ENCODE measurements at regions of chr4 and their contacts with region 1.

Region 1: DNA sequence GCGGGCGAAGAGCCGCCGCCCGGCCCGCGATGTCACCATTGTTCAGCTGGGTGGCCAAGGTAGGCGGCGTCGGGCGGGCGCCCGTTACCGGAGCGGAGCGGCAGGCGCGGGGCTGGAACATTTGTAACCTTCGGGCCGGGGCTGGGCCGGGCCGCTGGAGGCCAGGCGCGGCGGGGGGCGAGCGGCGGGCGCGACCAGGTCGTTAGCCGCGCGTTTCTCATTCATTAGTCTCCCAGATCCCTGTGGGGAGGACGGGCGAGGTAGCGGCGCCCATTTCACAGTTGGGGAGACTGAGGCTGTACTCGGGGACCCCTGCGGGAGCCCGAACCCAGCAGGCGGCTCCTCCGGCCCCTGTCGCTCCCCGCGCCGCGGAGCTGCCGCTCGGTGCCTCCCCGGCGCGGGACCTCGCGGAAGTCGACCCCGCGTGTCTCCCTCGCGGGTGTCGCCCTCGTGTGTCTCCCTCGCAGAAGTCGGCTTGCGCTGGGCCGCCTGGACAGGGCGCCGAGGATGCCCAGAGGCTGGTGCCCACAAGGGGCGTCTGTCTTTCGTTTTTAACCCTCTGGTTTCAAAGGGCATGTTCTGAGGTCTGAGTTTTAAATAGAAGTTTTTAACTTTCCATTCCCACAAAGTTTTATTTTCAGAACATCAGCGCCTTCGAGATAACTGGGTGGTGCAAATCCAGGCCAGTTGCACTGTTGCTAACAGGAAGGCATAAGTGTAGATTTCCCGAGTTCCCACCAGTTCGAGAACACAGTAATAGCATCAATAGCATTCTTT is 17.5 kb downstream of the PTTG2 start:
- DNase-seq: peak; percentile 93
- ATAC-seq: peak; percentile 87

Region 2: DNA sequence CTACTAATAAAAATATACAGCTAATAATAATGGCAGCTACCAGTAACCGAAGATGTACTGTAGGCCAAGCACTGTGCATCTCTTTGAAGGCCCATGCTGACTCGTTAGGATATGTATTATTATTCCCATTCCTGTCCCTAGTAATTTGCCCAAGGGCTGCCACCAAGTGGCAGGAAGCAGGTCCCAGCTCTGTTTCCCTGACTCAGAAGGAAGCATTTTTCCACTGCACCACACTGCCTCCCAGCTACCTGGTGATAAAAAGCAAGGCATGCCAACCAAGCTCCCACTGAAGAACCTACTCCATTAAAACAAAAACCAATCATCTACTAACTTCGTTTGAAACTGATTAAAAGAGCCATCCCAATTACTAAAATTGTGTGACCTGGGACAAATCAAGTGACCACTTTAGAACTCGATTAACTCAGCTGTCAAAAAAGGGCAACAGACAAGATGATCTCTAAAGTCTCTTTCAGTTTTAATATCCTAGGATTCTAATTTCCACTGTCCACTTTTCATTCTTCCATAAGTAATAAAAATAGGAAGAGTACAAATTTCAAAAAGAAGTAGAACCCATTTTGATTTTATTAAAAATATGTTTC is 175.5 kb before region 1 on chr4:
- intact Hi-C with region 1: loop called (anchors 5 kb)
- DNase-seq: no peak
- ATAC-seq: peak; percentile 83